ENCODE measurements at regions of chr2 and their contacts with region 1.

Region 1: DNA sequence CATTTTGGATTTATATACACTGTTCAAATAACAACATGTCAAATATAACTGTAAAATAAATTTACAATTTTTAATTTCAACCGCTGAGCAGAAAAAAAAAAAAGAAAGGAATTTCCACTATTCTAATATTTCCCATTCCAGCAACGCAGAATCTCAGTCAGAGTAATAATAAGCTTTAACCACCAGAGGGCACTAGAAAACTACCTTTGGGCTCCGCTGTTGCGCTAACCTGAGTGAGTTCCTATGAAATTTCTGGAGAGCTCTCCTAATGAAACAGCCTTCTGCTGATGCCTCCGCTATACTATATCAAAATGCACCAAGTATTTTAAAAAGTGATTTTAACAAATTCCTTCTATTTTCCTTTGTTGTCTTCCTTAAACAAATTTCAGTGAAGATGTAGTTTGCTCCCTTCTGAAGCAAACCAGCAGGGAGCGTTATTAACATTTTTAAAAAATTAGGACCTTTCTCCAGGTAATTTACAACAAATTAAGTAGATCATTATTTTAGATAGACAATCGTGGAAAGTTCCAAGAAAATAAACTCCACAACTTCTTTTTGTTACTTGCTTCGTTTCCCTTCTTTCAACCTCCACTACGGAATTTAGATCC is 23.0 kb downstream of the ERMN start:
- DNase-seq: peak; percentile 33
- ATAC-seq: peak; percentile 74
- H3K4me3 Mint-ChIP-seq: no peak overlapping the region
- H3K27ac Mint-ChIP-seq: no peak overlapping the region
- H3K4me1 Mint-ChIP-seq: peaks cover 30% of the 10 kb centered on the region
- H3K27me3 Mint-ChIP-seq: no peaks in the 10 kb centered on the region
- CTCF ChIP-seq: peak; percentile 96

Region 2: DNA sequence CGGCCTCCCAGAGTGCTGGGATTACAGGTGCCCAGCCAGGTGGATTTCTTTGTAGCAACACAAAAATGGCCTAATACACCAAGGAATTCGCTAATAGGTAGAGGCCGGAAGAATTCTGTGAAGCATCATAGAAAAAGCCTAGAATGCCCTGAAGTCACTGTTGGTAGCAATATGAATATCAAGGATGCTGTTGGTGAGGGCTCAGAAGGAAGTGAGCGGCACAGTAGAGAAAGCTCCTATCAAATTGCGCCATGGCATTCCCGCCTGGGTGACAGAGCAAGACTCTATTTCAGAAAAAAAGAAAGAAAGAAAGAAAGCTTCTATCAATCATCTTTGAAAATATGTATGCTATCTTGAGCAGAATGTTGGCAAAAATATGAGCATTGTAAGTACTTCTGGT is 21.3 kb before region 1 on chr2:
- CTCF ChIA-PET with region 1: interaction called, 15 read pairs
- POLR2A ChIA-PET with region 1: no interaction called
- intact Hi-C with region 1: no loop called
- DNase-seq: no peak
- ATAC-seq: no peak
- H3K4me3 Mint-ChIP-seq: no peak overlapping the region
- H3K27ac Mint-ChIP-seq: no peak overlapping the region
- H3K4me1 Mint-ChIP-seq: no peaks in the 10 kb centered on the region
- H3K27me3 Mint-ChIP-seq: peaks cover 16% of the 10 kb centered on the region
- CTCF ChIP-seq: no peak

Region 3: GRCh38 chr2:157327621-157328500 is 25.3 kb after region 1 on chr2:
- CTCF ChIA-PET with region 1: interaction called, 246 read pairs
- POLR2A ChIA-PET with region 1: interaction called, 6 read pairs
- intact Hi-C with region 1: no loop called
- DNase-seq: peak; percentile 95
- ATAC-seq: peak; percentile 93
- H3K4me3 Mint-ChIP-seq: peak overlapping the region; percentile 45
- H3K27ac Mint-ChIP-seq: peak overlapping the region; percentile 80
- H3K4me1 Mint-ChIP-seq: peaks cover 59% of the 10 kb centered on the region
- H3K27me3 Mint-ChIP-seq: no peaks in the 10 kb centered on the region
- CTCF ChIP-seq: peak; percentile 93

Region 4: GRCh38 chr2:157413326-157414035 is 110.9 kb after region 1 on chr2:
- CTCF ChIA-PET with region 1: interaction called, 13 read pairs
- POLR2A ChIA-PET with region 1: interaction called, 5 read pairs
- intact Hi-C with region 1: no loop called
- DNase-seq: peak; percentile 71
- ATAC-seq: peak; percentile 65
- H3K4me3 Mint-ChIP-seq: peak overlapping the region; percentile 58
- H3K27ac Mint-ChIP-seq: peak overlapping the region; percentile 97
- H3K4me1 Mint-ChIP-seq: peaks cover 85% of the 10 kb centered on the region
- H3K27me3 Mint-ChIP-seq: no peaks in the 10 kb centered on the region
- CTCF ChIP-seq: no peak

Region 5: GRCh38 chr2:157497638-157498314 is 195.2 kb after region 1 on chr2:
- CTCF ChIA-PET with region 1: interaction called, 19 read pairs
- POLR2A ChIA-PET with region 1: no interaction called
- intact Hi-C with region 1: loop called (anchors 5 kb)
- DNase-seq: peak; percentile 36
- ATAC-seq: peak; percentile 94
- H3K4me3 Mint-ChIP-seq: no peak overlapping the region
- H3K27ac Mint-ChIP-seq: no peak overlapping the region
- H3K4me1 Mint-ChIP-seq: peaks cover 28% of the 10 kb centered on the region
- H3K27me3 Mint-ChIP-seq: no peaks in the 10 kb centered on the region
- CTCF ChIP-seq: peak; percentile 86

Region 6: DNA sequence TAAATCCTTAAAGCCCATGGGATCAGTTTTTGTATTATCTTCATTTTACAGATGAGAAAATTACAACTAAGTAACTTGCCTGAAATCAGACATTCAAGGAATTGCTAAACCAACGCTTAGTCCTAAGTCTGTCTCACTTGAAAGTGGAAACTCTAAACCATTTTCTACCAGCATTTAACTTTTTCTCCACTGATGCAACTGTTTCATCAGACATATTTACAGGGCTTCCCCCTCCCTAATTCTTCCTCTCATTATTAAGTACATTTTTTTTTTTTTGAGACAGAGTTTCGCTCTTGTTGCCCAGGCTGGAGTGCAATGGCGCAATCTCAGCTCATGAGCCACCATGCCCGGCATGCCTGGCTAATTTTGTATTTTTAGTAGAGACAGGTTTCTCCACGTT is 237.5 kb after region 1 on chr2:
- CTCF ChIA-PET with region 1: no interaction called
- POLR2A ChIA-PET with region 1: no interaction called
- intact Hi-C with region 1: no loop called
- DNase-seq: no peak
- ATAC-seq: no peak
- H3K4me3 Mint-ChIP-seq: no peak overlapping the region
- H3K27ac Mint-ChIP-seq: no peak overlapping the region
- H3K4me1 Mint-ChIP-seq: peaks cover 3% of the 10 kb centered on the region
- H3K27me3 Mint-ChIP-seq: no peaks in the 10 kb centered on the region
- CTCF ChIP-seq: no peak

Region 7: DNA sequence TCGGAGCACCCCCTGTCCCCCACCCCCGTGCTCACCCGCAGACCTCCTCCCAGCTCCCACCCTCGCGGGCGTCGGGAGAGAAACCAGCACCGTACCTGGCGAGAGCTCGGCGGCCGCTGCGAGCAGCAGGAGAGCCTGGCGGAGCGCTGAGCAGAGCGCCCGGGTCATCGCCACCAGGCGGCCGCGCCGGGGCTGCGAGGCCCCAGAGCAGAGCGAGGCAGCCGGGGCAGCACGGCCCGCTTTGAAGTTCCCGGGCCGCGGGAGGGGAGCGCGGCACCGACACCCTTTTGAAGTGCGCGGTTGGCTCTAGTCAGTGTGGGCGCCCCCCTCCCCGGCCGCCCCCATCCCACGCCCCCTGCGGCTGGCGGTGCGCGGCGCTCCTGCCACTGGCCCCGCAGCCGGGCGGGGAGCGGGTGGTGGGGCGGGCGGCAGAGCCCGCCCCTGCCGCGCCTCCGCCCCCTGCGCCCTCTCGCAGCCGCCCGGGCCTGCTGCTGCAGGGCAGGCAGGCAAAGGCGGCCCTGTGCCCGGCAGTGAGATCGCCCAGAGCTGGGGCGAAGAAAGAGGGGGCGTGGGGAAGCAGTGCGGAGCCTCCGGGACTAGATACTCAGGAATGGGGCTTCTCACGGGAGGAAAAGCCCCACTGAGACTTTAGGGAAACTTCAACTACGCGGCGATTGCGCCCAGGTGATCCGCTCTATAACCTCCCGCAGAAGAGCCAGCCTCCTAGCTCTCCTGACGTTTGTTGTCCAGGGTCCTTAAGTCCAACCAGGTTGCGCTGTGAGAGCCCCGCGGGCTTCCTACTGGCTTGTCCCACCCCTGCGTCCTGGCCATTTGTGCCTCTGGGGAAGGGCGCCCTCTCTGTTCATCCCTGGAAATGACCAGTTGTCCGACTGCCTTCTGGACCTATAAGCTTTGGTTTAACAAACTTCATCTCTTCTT is 326.1 kb after region 1 on chr2 and contains the start of gene ACVR1C:
- CTCF ChIA-PET with region 1: interaction called, 27 read pairs
- POLR2A ChIA-PET with region 1: no interaction called
- intact Hi-C with region 1: loop called (anchors 10 kb)
- DNase-seq: peak; percentile 72
- ATAC-seq: peak; percentile 87
- H3K4me3 Mint-ChIP-seq: peak within 1 kb of the TSS; percentile 79
- H3K27ac Mint-ChIP-seq: peak within 1 kb of the TSS; percentile 45
- H3K4me1 Mint-ChIP-seq: peaks cover 31% of the 10 kb centered on the region
- H3K27me3 Mint-ChIP-seq: peaks cover 6% of the 10 kb centered on the region
- CTCF ChIP-seq: peak; percentile 53
- total RNA-seq, gene ACVR1C: 1.7 to 2.2 TPM

Region 8: DNA sequence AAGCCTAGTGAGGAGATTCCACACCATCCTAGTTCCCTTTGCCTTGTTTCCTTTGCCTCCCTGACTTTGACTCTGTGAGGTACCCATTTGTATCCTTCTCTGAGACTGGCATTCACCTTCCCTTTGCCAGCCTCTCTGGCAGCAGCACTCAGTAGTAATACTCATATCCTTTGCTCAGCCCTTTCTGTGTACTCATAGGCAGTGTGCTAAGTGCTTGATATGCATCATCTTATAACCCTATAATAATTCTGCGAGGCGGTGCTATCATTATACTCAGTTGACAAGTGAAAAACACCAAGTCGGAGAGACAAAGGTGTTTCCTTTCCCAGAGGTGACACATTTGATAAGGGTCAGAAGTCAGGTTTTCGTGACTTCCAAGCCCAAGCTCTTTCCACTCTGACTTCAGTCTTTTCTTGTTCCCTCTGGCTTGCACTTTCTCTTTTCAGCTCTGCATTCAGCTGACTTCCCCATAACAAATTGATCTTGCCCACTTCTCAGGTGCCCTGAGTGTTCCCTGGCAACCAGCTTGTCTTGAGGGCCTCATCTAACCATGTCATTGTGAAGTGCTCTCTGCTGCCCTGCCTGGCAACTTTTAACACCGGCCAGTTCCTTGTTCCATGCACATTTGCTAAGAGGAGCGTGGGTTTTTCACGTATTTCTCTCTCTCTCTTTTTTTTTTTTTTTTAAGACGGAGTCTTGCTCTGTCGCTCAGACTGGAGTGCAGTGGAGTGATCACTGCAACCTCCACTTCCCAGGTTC is 704.5 kb after region 1 on chr2:
- CTCF ChIA-PET with region 1: interaction called, 7 read pairs
- POLR2A ChIA-PET with region 1: no interaction called
- intact Hi-C with region 1: loop called (anchors 5 kb)
- DNase-seq: peak; percentile 31
- ATAC-seq: peak; percentile 65
- H3K4me3 Mint-ChIP-seq: no peak overlapping the region
- H3K27ac Mint-ChIP-seq: no peak overlapping the region
- H3K4me1 Mint-ChIP-seq: peaks cover 4% of the 10 kb centered on the region
- H3K27me3 Mint-ChIP-seq: peaks cover 2% of the 10 kb centered on the region
- CTCF ChIP-seq: no peak